ENCODE measurements at regions of chr5 and their contacts with region 1.

Region 1: GRCh38 chr5:44774279-44774880 is 34.4 kb upstream of the MRPS30 start:
- H3K4me3 Mint-ChIP-seq: no peak overlapping the region
- H3K27ac Mint-ChIP-seq: no peak overlapping the region
- H3K4me1 Mint-ChIP-seq: no peaks in the 10 kb centered on the region
- H3K27me3 Mint-ChIP-seq: no peaks in the 10 kb centered on the region

Region 2: DNA sequence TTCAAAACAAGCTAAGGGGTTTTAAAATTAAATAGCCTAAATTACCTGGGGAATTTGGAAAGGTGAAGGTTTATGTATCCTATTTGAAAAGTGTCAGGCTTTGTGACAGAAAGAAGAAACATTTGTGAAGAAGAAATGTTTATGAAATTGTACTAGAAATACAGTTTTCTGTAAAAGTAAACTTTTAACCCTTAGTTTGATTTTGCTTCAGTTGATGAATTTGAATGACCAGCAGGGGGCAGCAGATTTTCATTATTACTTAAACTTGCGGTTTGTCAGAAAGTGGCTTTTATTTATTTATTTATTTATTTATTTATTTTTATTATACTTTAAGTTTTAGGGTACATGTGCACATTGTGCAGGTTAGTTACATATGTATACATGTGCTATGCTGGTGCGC is 1113.3 kb before region 1 on chr5:
- intact Hi-C with region 1: loop called (anchors 10 kb)
- H3K4me3 Mint-ChIP-seq: no peak overlapping the region
- H3K27ac Mint-ChIP-seq: no peak overlapping the region
- H3K4me1 Mint-ChIP-seq: no peaks in the 10 kb centered on the region
- H3K27me3 Mint-ChIP-seq: no peaks in the 10 kb centered on the region

Region 3: GRCh38 chr5:43729846-43730478 is 1044.4 kb before region 1 on chr5:
- intact Hi-C with region 1: loop called (anchors 5 kb)
- H3K4me3 Mint-ChIP-seq: no peak overlapping the region
- H3K27ac Mint-ChIP-seq: no peak overlapping the region
- H3K4me1 Mint-ChIP-seq: peaks cover 5% of the 10 kb centered on the region
- H3K27me3 Mint-ChIP-seq: peaks cover 9% of the 10 kb centered on the region

Region 4: GRCh38 chr5:44365351-44365750 is 409.0 kb before region 1 on chr5:
- intact Hi-C with region 1: no loop called
- H3K4me3 Mint-ChIP-seq: no peak overlapping the region
- H3K27ac Mint-ChIP-seq: no peak overlapping the region
- H3K4me1 Mint-ChIP-seq: no peaks in the 10 kb centered on the region
- H3K27me3 Mint-ChIP-seq: no peaks in the 10 kb centered on the region

Region 5: GRCh38 chr5:44486591-44486990 is 287.8 kb before region 1 on chr5:
- intact Hi-C with region 1: no loop called
- H3K4me3 Mint-ChIP-seq: no peak overlapping the region
- H3K27ac Mint-ChIP-seq: no peak overlapping the region
- H3K4me1 Mint-ChIP-seq: no peaks in the 10 kb centered on the region
- H3K27me3 Mint-ChIP-seq: no peaks in the 10 kb centered on the region

Region 6: GRCh38 chr5:44536650-44537260 is 237.6 kb before region 1 on chr5:
- intact Hi-C with region 1: loop called (anchors 5 kb)
- H3K4me3 Mint-ChIP-seq: no peak overlapping the region
- H3K27ac Mint-ChIP-seq: no peak overlapping the region
- H3K4me1 Mint-ChIP-seq: no peaks in the 10 kb centered on the region
- H3K27me3 Mint-ChIP-seq: no peaks in the 10 kb centered on the region